GM12878 (cell line): ENCODE measurements at regions of chr17 and their contacts with region 1.

Region 1: GRCh38 chr17:1673041-1673785 is 11.5 kb downstream of the PRPF8 start:
- DNase-seq: no peak
- ATAC-seq: no peak
- H3K4me3 ChIP-seq: no peak overlapping the region
- H3K27ac ChIP-seq: no peak overlapping the region
- H3K4me1 ChIP-seq: no peaks in the 10 kb centered on the region
- H3K27me3 ChIP-seq: no peaks in the 10 kb centered on the region
- CTCF ChIP-seq: no peak
- EP300 ChIP-seq: no peak
- POLR2A ChIP-seq: peak; percentile 66
- RAD21 ChIP-seq: no peak

Region 2: GRCh38 chr17:1580979-1581678 is 92.1 kb before region 1 on chr17:
- CTCF ChIA-PET with region 1: no interaction called
- POLR2A ChIA-PET with region 1: no interaction called
- RAD21 ChIA-PET with region 1: no interaction called
- SMC1A ChIA-PET with region 1: no interaction called
- in situ Hi-C with region 1: no loop called
- intact Hi-C with region 1: no loop called
- DNase-seq: no peak
- ATAC-seq: no peak
- H3K4me3 ChIP-seq: no peak overlapping the region
- H3K27ac ChIP-seq: no peak overlapping the region
- H3K4me1 ChIP-seq: peaks cover 10% of the 10 kb centered on the region
- H3K27me3 ChIP-seq: no peaks in the 10 kb centered on the region
- CTCF ChIP-seq: no peak
- EP300 ChIP-seq: no peak
- POLR2A ChIP-seq: no peak
- RAD21 ChIP-seq: no peak

Region 3: GRCh38 chr17:1621273-1622228 is 51.7 kb before region 1 on chr17:
- CTCF ChIA-PET with region 1: no interaction called
- POLR2A ChIA-PET with region 1: no interaction called
- RAD21 ChIA-PET with region 1: no interaction called
- SMC1A ChIA-PET with region 1: no interaction called
- in situ Hi-C with region 1: no loop called
- intact Hi-C with region 1: no loop called
- DNase-seq: no peak
- ATAC-seq: no peak
- H3K4me3 ChIP-seq: no peak overlapping the region
- H3K27ac ChIP-seq: no peak overlapping the region
- H3K4me1 ChIP-seq: peaks cover 7% of the 10 kb centered on the region
- H3K27me3 ChIP-seq: no peaks in the 10 kb centered on the region
- CTCF ChIP-seq: no peak
- EP300 ChIP-seq: no peak
- POLR2A ChIP-seq: no peak
- RAD21 ChIP-seq: no peak

Region 4: GRCh38 chr17:1865252-1866037 is 192.2 kb after region 1 on chr17:
- CTCF ChIA-PET with region 1: interaction called, 10 read pairs
- POLR2A ChIA-PET with region 1: no interaction called
- RAD21 ChIA-PET with region 1: interaction called, 6 read pairs
- SMC1A ChIA-PET with region 1: no interaction called
- in situ Hi-C with region 1: no loop called
- intact Hi-C with region 1: no loop called
- DNase-seq: no peak
- ATAC-seq: peak; percentile 79
- H3K4me3 ChIP-seq: no peak overlapping the region
- H3K27ac ChIP-seq: no peak overlapping the region
- H3K4me1 ChIP-seq: no peaks in the 10 kb centered on the region
- H3K27me3 ChIP-seq: no peaks in the 10 kb centered on the region
- CTCF ChIP-seq: peak; percentile 54 to 70 (median 59)
- EP300 ChIP-seq: no peak
- POLR2A ChIP-seq: no peak
- RAD21 ChIP-seq: peak; percentile 65